Activated CD4-positive, alpha-beta T cell treated with anti-CD3 and anti-CD28 coated beads for 36 hours (primary cell): ENCODE measurements at regions of chr11 and their contacts with region 1.

Region 1: DNA sequence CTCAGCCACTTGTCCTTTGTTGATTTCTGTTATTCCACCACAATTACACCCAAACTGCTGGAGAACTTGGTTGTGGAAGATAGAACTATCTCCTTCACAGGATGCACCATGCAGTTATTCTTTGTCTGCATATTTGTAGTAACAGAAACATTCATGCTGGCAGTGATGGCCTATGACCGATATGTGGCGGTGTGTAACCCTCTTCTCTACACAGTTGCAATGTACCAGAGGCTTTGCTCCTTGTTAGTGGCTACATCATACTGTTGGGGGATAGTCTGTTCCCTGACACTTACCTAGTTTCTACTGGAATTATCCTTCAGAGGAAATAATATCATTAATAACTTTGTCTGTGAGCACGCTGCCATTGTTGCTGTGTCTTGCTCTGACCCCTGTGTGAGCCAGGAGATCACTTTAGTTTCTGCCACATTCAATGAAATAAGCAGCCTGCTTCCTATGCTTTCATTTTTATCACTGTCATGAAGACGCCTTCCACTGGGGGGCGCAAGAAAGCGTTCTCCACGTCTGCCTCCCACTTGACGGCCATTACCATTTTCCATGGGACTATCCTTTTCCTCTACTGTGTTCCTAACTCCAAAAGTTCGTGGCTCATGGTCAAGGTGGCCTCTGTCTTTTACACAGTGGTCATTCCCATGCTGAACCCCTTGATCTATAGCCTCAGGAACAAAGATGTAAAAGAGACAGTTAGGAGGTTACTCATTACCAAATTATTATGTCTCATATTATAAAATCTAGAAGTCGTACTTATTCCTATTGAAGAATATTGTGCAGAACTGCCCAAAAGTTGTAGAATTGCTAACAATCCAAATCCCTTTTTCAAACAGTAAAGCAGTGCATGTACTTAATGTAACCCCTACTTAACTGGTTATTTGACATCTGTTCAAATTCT is 53.2 kb downstream of the OR4C6 start:
- DNase-seq: peak; percentile 33
- ATAC-seq: no peak
- H3K4me3 Mint-ChIP-seq: no peak overlapping the region
- H3K27ac Mint-ChIP-seq: no peak overlapping the region
- H3K4me1 Mint-ChIP-seq: no peaks in the 10 kb centered on the region
- H3K27me3 Mint-ChIP-seq: no peaks in the 10 kb centered on the region

Region 2: DNA sequence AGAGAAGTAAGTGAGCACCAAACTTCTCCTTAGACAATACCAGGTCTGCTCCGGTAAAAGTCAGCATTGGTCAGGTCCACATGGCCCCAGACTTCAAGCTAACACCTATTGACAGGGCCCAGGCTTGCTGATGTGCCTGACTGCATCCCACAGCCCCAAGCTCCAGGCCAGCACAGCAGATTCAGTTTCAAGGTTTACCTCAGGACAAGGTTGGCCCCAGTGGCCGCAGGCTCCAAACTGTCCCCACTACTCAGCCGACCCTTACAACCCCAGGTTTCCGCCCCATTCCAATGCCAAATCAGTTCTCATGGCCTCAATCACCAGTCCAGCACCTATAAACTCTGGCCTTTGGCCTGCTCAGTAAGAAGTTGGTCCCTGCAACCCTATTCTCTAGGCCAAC is 13.8 kb before region 1 on chr11:
- CTCF ChIA-PET with region 1: no interaction called
- POLR2A ChIA-PET with region 1: no interaction called
- intact Hi-C with region 1: no loop called
- DNase-seq: no peak
- ATAC-seq: no peak
- H3K4me3 Mint-ChIP-seq: no peak overlapping the region
- H3K27ac Mint-ChIP-seq: no peak overlapping the region
- H3K4me1 Mint-ChIP-seq: no peaks in the 10 kb centered on the region
- H3K27me3 Mint-ChIP-seq: no peaks in the 10 kb centered on the region

Region 3: GRCh38 chr11:55838452-55838851 is 123.2 kb after region 1 on chr11 and contains the start of gene OR5D16:
- CTCF ChIA-PET with region 1: no interaction called
- POLR2A ChIA-PET with region 1: no interaction called
- intact Hi-C with region 1: loop called in 1 of 2 experiments (anchors 10 kb)
- DNase-seq: no peak
- ATAC-seq: no peak
- H3K4me3 Mint-ChIP-seq: no peak within 1 kb of the TSS
- H3K27ac Mint-ChIP-seq: no peak within 1 kb of the TSS
- H3K4me1 Mint-ChIP-seq: no peaks in the 10 kb centered on the region
- H3K27me3 Mint-ChIP-seq: no peaks in the 10 kb centered on the region
- total RNA-seq, gene OR5D16: not detected

Region 4: GRCh38 chr11:55902303-55902702 is 187.1 kb after region 1 on chr11:
- CTCF ChIA-PET with region 1: no interaction called
- POLR2A ChIA-PET with region 1: no interaction called
- intact Hi-C with region 1: loop called in 1 of 2 experiments (anchors 10 kb)
- DNase-seq: no peak
- ATAC-seq: no peak
- H3K4me3 Mint-ChIP-seq: no peak overlapping the region
- H3K27ac Mint-ChIP-seq: no peak overlapping the region
- H3K4me1 Mint-ChIP-seq: no peaks in the 10 kb centered on the region
- H3K27me3 Mint-ChIP-seq: no peaks in the 10 kb centered on the region

Region 5: DNA sequence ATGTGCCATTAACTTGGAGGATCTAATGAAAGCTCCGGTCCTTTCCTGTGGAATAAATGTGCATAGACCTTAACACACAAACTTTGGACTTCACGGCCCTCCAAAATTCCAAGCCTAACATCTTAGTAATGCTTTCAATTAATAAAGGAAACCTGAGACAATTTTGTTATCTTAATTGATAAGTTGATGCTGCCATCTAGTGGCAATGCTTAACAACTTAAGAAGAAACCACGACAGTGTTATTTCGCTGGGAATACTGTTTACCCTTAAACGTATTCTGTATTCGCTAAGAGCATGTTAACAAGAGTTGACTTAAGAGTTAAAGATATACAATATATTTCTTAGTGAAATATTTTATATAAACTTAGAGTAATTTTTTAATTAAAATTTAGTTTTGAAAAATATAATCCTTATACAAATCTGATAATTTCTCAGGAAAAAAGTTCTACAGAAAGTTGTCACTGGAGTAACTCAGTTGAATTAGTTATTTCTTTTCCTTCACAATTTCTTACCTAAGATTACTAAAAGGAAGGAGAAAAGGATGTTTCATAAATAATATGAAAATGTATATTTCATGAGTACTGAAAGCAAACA is 1068.3 kb after region 1 on chr11:
- CTCF ChIA-PET with region 1: no interaction called
- POLR2A ChIA-PET with region 1: no interaction called
- intact Hi-C with region 1: loop called in 1 of 2 experiments (anchors 5 kb)
- DNase-seq: no peak
- ATAC-seq: no peak
- H3K4me3 Mint-ChIP-seq: no peak overlapping the region
- H3K27ac Mint-ChIP-seq: no peak overlapping the region
- H3K4me1 Mint-ChIP-seq: no peaks in the 10 kb centered on the region
- H3K27me3 Mint-ChIP-seq: peaks cover 4% of the 10 kb centered on the region